Activated CD8-positive, alpha-beta T cell treated with anti-CD3 and anti-CD28 coated beads for 36 hours (primary cell): ENCODE measurements at regions of chr11 and their contacts with region 1.

Region 1: DNA sequence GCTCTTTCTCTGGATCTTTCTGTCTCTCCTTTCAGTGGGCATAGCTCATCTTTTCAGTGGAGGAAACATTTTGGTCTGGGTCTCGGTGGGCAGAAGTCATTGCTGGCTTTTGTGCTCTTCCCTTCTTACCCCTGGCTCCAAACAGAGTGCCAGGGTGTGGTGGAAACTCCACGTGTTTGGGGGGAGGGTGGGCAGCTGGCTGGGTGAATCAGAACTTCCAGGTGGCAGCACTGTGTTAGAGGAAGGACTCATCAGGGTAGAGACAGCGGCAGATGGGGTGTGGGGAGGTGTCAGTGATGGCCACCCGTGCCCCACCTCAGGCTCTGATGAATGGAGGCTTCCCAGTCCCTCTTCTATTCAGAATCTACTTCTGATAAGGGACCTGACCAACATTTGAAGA is 114.0 kb downstream of the GRIK4 start:
- DNase-seq: peak; percentile 3
- ATAC-seq: no peak
- H3K4me3 Mint-ChIP-seq: no peak overlapping the region
- H3K27ac Mint-ChIP-seq: no peak overlapping the region
- H3K4me1 Mint-ChIP-seq: no peaks in the 10 kb centered on the region
- H3K27me3 Mint-ChIP-seq: no peaks in the 10 kb centered on the region
- CTCF ChIP-seq: no peak

Region 2: DNA sequence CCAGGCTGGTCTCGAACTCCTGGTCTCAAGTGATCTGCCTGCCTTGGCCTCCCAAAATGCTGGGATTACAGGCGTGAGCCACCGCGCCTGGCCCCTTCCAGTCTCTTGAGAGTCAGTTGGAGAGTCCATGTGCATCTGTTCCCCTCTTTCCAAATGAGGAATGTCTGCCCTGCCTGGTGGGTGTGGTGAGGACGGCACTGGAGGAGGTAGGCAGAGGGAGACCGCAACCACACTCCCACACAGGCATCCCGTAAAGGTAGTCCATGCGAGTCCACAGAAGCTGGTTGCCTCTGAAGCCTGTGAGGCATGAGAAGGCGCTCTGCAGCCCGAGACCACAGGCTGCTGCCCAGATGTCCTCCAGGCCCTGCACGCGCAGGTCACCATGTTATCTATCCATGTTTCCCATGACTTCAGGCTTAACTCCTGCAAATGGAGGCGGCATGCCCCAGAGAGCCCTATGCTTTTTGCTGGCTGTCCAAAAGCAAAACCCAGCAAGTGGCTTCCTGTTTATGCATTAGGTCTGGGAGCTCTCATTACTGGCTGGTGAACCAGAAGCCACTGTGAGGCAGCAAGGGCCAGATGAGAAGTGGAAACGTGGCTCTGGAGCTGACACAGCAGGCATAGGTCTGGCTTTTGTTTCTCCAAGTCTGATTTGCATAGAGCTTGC is 70.7 kb before region 1 on chr11:
- CTCF ChIA-PET with region 1: no interaction called
- POLR2A ChIA-PET with region 1: no interaction called
- intact Hi-C with region 1: loop called (anchors 2 kb)
- DNase-seq: no peak
- ATAC-seq: no peak
- H3K4me3 Mint-ChIP-seq: no peak overlapping the region
- H3K27ac Mint-ChIP-seq: no peak overlapping the region
- H3K4me1 Mint-ChIP-seq: no peaks in the 10 kb centered on the region
- H3K27me3 Mint-ChIP-seq: peaks cover 8% of the 10 kb centered on the region
- CTCF ChIP-seq: no peak

Region 3: GRCh38 chr11:120612513-120613263 is 12.9 kb before region 1 on chr11:
- CTCF ChIA-PET with region 1: no interaction called
- POLR2A ChIA-PET with region 1: no interaction called
- intact Hi-C with region 1: no loop called
- DNase-seq: peak; percentile 58
- ATAC-seq: peak; percentile 88
- H3K4me3 Mint-ChIP-seq: no peak overlapping the region
- H3K27ac Mint-ChIP-seq: no peak overlapping the region
- H3K4me1 Mint-ChIP-seq: peaks cover 8% of the 10 kb centered on the region
- H3K27me3 Mint-ChIP-seq: peaks cover 21% of the 10 kb centered on the region
- CTCF ChIP-seq: no peak